ENCODE measurements at regions of chr20 and their contacts with region 1.

Region 1: DNA sequence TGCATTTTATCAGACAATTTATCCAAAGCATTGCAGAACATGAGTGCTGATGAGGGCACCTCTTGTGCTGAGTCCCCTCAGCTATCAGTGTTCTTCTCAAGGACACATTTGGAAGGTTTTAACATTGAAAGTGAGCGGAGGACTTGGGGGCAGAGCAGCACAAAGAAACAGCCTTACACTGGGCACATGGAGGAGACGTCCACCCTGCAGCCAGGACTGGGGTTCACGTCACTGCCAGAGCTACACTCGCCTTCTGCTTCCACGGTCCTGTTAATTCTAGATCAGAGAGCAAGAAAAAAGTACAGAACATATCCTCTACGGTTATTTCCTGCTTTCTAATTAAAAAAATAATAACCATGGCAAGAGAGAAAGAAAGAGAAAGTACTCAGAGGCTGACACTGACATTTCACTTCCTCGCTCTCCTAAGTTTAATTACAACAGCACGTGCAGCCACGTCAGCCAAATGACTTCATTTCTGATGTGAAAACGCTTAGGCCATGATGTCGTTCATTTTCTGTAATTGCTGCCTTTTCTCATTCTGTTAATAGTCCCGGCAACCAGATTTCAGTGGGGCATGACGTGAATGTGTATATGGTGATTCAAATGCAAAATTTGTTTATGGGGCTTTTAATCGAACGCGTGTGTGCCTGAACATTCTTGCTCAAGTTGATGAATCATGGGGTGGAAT is 5.1 kb downstream of the PRND start:
- DNase-seq: peak; percentile 51
- H3K4me3 ChIP-seq: no peak overlapping the region
- H3K27ac ChIP-seq: no peak overlapping the region
- H3K4me1 ChIP-seq: peaks cover 8% of the 10 kb centered on the region
- H3K27me3 ChIP-seq: peaks cover under 1 to 10% of the 10 kb centered on the region in 2 experiments
- CTCF ChIP-seq: no peak
- POLR2A ChIP-seq: no peak

Region 2: GRCh38 chr20:4607287-4607713 is 119.6 kb before region 1 on chr20:
- CTCF ChIA-PET with region 1: interaction called, 22 read pairs
- POLR2A ChIA-PET with region 1: interaction called, 11 read pairs
- dilution Hi-C with region 1: no loop called
- intact Hi-C with region 1: no loop called
- DNase-seq: peak; percentile 66
- H3K4me3 ChIP-seq: no peak overlapping the region
- H3K27ac ChIP-seq: no peak overlapping the region
- H3K4me1 ChIP-seq: no peaks in the 10 kb centered on the region
- H3K27me3 ChIP-seq: peaks cover 19 to 33% of the 10 kb centered on the region in 2 experiments
- CTCF ChIP-seq: peak; percentile 73 to 86
- POLR2A ChIP-seq: no peak

Region 3: DNA sequence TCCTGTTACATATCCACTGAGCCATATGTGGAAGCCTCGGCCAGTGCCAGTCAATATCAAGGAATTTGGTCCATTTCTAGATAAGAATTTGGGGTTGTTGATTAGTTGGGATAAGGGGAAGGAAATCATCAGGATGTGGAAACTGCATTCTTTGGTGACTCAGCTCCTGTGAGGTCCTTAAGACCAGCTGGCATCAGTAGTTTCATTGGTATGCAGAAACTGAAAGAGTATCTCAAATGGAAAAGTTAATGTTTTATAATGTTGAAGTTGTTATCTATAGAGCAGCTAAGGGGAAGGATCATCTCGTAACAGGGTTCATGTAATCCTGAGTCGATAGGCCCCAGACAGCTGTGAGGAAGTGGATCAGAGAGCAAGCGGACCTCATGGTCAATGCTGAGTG is 93.1 kb before region 1 on chr20:
- CTCF ChIA-PET with region 1: no interaction called
- POLR2A ChIA-PET with region 1: no interaction called
- dilution Hi-C with region 1: no loop called
- intact Hi-C with region 1: no loop called
- DNase-seq: peak; percentile 88
- H3K4me3 ChIP-seq: no peak overlapping the region
- H3K27ac ChIP-seq: peak overlapping the region; percentile 80
- H3K4me1 ChIP-seq: peaks cover 16% of the 10 kb centered on the region
- H3K27me3 ChIP-seq: peaks cover 0 to 2% of the 10 kb centered on the region in 2 experiments
- CTCF ChIP-seq: no peak
- POLR2A ChIP-seq: no peak

Region 4: GRCh38 chr20:4740774-4741431 is 14.0 kb after region 1 on chr20:
- CTCF ChIA-PET with region 1: interaction called, 10 read pairs
- POLR2A ChIA-PET with region 1: no interaction called
- dilution Hi-C with region 1: no loop called
- intact Hi-C with region 1: no loop called
- DNase-seq: peak; percentile 52
- H3K4me3 ChIP-seq: no peak overlapping the region
- H3K27ac ChIP-seq: no peak overlapping the region
- H3K4me1 ChIP-seq: no peaks in the 10 kb centered on the region
- H3K27me3 ChIP-seq: peaks cover 11 to 14% of the 10 kb centered on the region in 2 experiments
- CTCF ChIP-seq: peak; percentile 78 to 81
- POLR2A ChIP-seq: no peak

Region 5: DNA sequence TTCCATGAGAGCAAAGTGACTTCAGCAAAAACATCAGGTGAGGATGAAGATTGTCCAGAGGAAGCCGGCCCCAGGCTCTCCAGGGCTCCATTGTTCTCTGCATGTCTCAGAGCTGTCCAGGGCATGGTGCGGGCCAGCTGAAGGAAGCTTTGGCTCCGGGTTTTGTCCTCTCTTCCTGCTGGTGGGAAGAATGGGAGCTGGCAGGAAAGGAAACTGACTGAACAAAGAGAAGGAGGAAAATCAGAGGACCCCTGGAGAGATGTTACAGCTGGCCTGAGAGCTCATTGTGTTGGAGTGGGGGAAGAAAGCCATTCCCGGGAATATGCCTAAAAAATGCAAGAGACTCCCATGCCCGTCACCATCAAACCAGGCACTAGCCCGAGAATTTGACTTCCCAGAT is 22.0 kb after region 1 on chr20:
- CTCF ChIA-PET with region 1: no interaction called
- POLR2A ChIA-PET with region 1: no interaction called
- dilution Hi-C with region 1: no loop called
- intact Hi-C with region 1: loop called (anchors 1 kb)
- DNase-seq: peak; percentile 66
- H3K4me3 ChIP-seq: no peak overlapping the region
- H3K27ac ChIP-seq: no peak overlapping the region
- H3K4me1 ChIP-seq: peaks cover 8% of the 10 kb centered on the region
- H3K27me3 ChIP-seq: peaks cover 28 to 36% of the 10 kb centered on the region in 2 experiments
- CTCF ChIP-seq: no peak
- POLR2A ChIP-seq: no peak

Measured in endothelial cell of umbilical vein (primary cell).